ENCODE measurements at regions of chr18 and their contacts with region 1.

Region 1: DNA sequence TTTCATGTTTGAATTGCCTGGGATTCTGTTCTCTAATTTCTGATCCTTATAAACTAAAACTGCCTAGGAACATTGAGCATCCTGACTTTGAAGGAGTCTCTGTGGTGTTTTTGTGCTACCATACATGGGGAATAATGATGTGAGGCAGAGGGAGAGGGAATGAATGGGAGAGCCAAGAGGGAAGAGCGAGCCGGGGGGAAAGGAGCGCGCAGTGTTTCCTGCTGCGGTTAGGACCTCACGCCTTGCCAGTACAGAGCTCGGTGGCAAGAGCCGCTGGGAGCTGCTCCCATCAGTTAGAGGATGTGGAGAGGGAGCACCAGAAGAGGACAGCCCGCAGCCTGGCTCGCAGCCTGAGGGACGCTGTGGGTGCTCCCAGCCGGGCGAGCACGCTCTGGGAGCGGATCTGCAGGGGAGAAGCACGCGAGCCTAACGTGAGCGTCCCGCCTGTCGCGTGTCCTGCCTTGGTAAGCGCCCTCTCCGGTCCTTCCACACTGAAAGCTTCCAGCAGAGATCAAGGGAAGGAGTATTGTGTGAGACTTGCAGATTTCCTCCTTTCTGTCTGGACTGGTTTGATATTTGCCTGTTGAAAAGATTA is 114.7 kb downstream of the FAM210A start:
- DNase-seq: no peak
- ATAC-seq: no peak
- H3K4me3 Mint-ChIP-seq: peak overlapping the region; percentile 76
- H3K27ac Mint-ChIP-seq: peak overlapping the region; percentile 93
- H3K4me1 Mint-ChIP-seq: peaks cover 86% of the 10 kb centered on the region
- H3K27me3 Mint-ChIP-seq: no peaks in the 10 kb centered on the region
- CTCF ChIP-seq: no peak

Region 2: DNA sequence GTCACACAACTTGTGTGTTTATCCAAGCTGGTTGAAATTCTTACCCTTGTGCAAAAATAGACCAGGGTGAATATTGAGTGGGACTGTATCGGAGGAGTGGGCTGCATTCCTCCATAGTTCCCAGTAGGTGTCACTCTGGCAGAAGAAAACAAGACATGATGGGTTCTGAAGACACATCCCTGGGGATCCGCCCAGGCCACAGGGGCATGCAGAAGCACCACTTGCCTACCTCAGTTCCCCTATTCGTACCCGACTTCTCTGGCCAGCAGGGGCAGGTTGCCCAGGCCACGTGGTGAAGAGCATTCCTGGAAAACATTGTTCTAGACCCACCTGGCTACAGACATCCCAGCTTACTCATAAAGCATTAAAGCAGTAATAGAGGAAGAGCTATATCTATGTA is 53.6 kb before region 1 on chr18:
- CTCF ChIA-PET with region 1: interaction called, 14 read pairs
- POLR2A ChIA-PET with region 1: interaction called, 33 read pairs
- intact Hi-C with region 1: loop called (anchors 2 kb)
- DNase-seq: peak; percentile 57
- ATAC-seq: peak; percentile 48
- H3K4me3 Mint-ChIP-seq: no peak overlapping the region
- H3K27ac Mint-ChIP-seq: peak overlapping the region; percentile 4
- H3K4me1 Mint-ChIP-seq: peaks cover 43% of the 10 kb centered on the region
- H3K27me3 Mint-ChIP-seq: no peaks in the 10 kb centered on the region
- CTCF ChIP-seq: peak; percentile 82

Region 3: DNA sequence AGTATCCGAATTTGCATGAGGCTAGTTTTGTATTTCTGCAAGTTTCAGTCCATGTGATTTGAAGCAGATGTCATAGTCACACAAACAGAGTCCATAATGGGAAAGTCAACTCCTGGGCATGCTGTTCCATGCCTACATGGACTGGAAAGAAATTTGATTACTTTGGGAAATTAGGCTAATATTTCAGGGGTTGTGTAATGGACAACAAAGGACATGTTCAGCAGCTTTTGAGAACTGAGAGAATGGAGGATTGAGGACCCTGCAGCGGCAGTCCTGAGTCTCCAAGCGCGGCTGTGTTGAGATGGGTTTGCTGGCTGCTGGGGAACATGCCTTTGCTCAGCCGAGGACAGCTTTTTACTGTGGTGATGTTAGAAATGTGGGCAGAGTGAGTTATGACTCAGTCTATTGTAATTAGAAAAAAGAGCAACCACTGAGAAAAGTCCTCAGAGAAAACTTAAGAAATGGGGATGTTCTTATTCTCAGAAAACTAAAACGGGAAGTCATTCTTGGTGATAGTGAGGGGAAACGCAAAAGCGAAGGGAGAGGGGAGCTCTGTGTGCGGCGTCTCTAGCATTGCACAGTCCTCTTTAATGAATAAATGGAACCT is 34.5 kb before region 1 on chr18:
- CTCF ChIA-PET with region 1: interaction called, 20 read pairs
- POLR2A ChIA-PET with region 1: interaction called, 33 read pairs
- intact Hi-C with region 1: no loop called
- DNase-seq: peak; percentile 75
- ATAC-seq: peak; percentile 83
- H3K4me3 Mint-ChIP-seq: peak overlapping the region; percentile 56
- H3K27ac Mint-ChIP-seq: peak overlapping the region; percentile 88
- H3K4me1 Mint-ChIP-seq: peaks cover 59% of the 10 kb centered on the region
- H3K27me3 Mint-ChIP-seq: no peaks in the 10 kb centered on the region
- CTCF ChIP-seq: no peak

Region 4: DNA sequence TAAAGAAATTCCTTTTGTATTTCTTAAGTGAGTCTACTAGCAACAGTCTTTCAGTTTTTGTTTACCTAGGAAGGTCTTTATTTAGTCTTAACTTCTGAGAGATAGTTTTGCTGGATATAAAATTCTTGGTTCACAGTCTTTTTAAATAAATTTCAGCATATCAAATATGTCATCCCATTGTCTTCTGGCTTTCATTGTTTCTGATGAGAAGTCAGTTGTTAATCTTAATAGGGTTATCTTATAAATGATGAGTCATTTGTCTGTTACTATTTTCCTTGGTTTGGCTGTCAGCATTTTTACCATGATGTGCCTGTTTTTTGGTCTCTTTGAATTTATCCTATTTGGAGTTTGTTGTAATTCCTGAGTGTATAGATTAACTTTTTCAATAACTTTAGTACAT is 14.6 kb before region 1 on chr18:
- CTCF ChIA-PET with region 1: interaction called, 11 read pairs
- POLR2A ChIA-PET with region 1: interaction called, 9 read pairs
- intact Hi-C with region 1: no loop called
- DNase-seq: no peak
- ATAC-seq: peak; percentile 30
- H3K4me3 Mint-ChIP-seq: no peak overlapping the region
- H3K27ac Mint-ChIP-seq: no peak overlapping the region
- H3K4me1 Mint-ChIP-seq: peaks cover 11% of the 10 kb centered on the region
- H3K27me3 Mint-ChIP-seq: no peaks in the 10 kb centered on the region
- CTCF ChIP-seq: no peak

Region 5: GRCh38 chr18:13703899-13704298 is 92.2 kb after region 1 on chr18:
- CTCF ChIA-PET with region 1: no interaction called
- POLR2A ChIA-PET with region 1: no interaction called
- intact Hi-C with region 1: no loop called
- DNase-seq: no peak
- ATAC-seq: no peak
- H3K4me3 Mint-ChIP-seq: no peak overlapping the region
- H3K27ac Mint-ChIP-seq: no peak overlapping the region
- H3K4me1 Mint-ChIP-seq: peaks cover 8% of the 10 kb centered on the region
- H3K27me3 Mint-ChIP-seq: no peaks in the 10 kb centered on the region
- CTCF ChIP-seq: no peak

Measured in activated CD8-positive, alpha-beta T cell treated with anti-CD3 and anti-CD28 coated beads for 36 hours (primary cell).